RWPE1 (cell line): ENCODE measurements at regions of chr6 and their contacts with region 1.

Region 1: GRCh38 chr6:53484476-53485280 is 60.2 kb downstream of the GCLC start:
- DNase-seq: peak; percentile 30
- H3K27ac ChIP-seq: no peak overlapping the region
- CTCF ChIP-seq: peak; percentile 95

Region 2: DNA sequence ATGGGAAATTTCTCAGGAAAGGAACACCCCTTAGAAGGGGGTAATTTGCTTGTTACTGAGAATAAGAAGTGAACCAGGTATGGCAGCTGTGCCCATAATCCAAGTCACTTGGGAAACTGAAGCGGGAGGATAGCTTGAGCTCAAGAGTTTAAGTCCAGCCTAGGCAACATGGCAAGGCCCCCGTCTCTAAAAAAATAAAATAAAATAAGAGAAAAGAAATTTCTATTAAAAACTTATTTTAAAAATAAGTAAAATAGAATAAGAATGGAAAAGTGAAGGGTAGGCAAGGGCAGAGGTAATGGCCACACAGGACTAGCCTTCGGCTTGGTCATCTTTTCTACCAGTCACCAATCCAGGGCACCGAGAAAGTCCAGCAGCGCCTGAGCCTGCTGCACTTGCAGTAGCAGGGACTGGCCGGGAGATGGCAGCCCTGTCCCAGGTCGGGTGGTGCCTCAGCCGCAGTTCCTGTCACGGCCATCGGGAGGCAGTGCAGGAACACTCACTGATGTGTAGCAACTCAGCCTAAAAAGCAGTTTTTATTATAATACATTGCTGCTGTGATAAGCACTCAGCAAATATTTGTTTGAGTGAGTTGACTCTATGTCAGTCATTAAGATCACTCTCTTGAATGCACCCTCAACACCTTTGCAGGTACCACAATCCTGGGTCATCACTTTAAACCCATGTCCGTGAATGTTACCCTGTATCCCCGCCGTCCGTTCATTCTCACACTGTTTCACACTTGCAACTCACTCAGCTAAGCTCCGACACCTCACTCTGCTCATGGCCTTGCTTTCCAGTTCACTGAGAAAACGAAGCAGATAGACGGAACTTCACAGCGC is 312.9 kb before region 1 on chr6:
- CTCF ChIA-PET with region 1: interaction called, 16 read pairs
- POLR2A ChIA-PET with region 1: no interaction called
- DNase-seq: peak; percentile 72
- H3K27ac ChIP-seq: no peak overlapping the region
- CTCF ChIP-seq: peak; percentile 100

Region 3: DNA sequence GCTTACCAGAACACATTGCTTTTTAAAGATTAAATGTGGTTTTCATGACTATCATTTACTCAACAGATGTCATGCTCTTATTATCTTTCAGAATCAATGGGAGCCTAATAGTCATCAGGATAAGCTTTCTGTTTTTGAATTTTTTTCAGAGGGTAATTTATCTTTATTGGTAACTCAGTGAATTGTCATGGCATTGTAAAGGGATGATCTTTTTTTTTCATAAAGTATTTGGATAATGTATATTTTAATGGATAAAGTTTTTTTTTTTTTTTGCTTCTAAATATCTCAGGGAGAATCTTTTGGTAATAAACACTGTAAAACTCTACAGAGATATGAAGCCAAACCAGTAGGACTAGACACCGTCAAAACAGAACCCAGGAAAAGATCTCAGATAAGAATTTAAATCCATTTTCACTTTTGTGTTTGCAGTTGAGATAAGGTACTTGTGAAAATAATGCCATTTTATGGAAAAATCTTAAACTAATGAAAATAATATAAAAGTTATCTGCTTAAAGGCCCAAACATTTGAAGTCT is 1388.8 kb after region 1 on chr6:
- CTCF ChIA-PET with region 1: interaction called, 10 read pairs
- POLR2A ChIA-PET with region 1: no interaction called
- DNase-seq: no peak
- H3K27ac ChIP-seq: no peak overlapping the region
- CTCF ChIP-seq: no peak